Activated CD4-positive, alpha-beta T cell treated with anti-CD3 and anti-CD28 coated beads, Interleukin-2, amount 10 ng/mL, durations not matched to agents 24 days and 14 days (primary cell): ENCODE measurements at regions of chr21 and their contacts with region 1.

Region 1: GRCh38 chr21:31098576-31099005 is 60.3 kb upstream of the KRTAP19-8 start:
- DNase-seq: peak; percentile 91
- H3K4me3 Mint-ChIP-seq: no peak overlapping the region
- H3K27ac Mint-ChIP-seq: no peak overlapping the region
- H3K4me1 Mint-ChIP-seq: peaks cover 24% of the 10 kb centered on the region
- H3K27me3 Mint-ChIP-seq: peaks cover 14% of the 10 kb centered on the region

Region 2: GRCh38 chr21:31088315-31088714 is 10.3 kb before region 1 on chr21:
- intact Hi-C with region 1: no loop called
- DNase-seq: no peak
- H3K4me3 Mint-ChIP-seq: no peak overlapping the region
- H3K27ac Mint-ChIP-seq: no peak overlapping the region
- H3K4me1 Mint-ChIP-seq: peaks cover 14% of the 10 kb centered on the region
- H3K27me3 Mint-ChIP-seq: peaks cover 32% of the 10 kb centered on the region

Region 3: GRCh38 chr21:31145274-31145673 is 46.7 kb after region 1 on chr21:
- intact Hi-C with region 1: no loop called
- DNase-seq: no peak
- H3K4me3 Mint-ChIP-seq: no peak overlapping the region
- H3K27ac Mint-ChIP-seq: no peak overlapping the region
- H3K4me1 Mint-ChIP-seq: peaks cover 33% of the 10 kb centered on the region
- H3K27me3 Mint-ChIP-seq: no peaks in the 10 kb centered on the region

Region 4: GRCh38 chr21:31580866-31581276 is 482.3 kb after region 1 on chr21:
- intact Hi-C with region 1: loop called (anchors 1 kb)
- DNase-seq: peak; percentile 93
- H3K4me3 Mint-ChIP-seq: no peak overlapping the region
- H3K27ac Mint-ChIP-seq: no peak overlapping the region
- H3K4me1 Mint-ChIP-seq: peaks cover 5% of the 10 kb centered on the region
- H3K27me3 Mint-ChIP-seq: peaks cover 26% of the 10 kb centered on the region

Region 5: GRCh38 chr21:31604591-31605190 is 506.1 kb after region 1 on chr21:
- intact Hi-C with region 1: loop called (anchors 1 kb)
- DNase-seq: peak; percentile 90
- H3K4me3 Mint-ChIP-seq: no peak overlapping the region
- H3K27ac Mint-ChIP-seq: no peak overlapping the region
- H3K4me1 Mint-ChIP-seq: peaks cover 3% of the 10 kb centered on the region
- H3K27me3 Mint-ChIP-seq: no peaks in the 10 kb centered on the region